Right lobe of liver (tissue), 6 donors: ENCODE measurements at regions of chr19 and their contacts with region 1.

Region 1: DNA sequence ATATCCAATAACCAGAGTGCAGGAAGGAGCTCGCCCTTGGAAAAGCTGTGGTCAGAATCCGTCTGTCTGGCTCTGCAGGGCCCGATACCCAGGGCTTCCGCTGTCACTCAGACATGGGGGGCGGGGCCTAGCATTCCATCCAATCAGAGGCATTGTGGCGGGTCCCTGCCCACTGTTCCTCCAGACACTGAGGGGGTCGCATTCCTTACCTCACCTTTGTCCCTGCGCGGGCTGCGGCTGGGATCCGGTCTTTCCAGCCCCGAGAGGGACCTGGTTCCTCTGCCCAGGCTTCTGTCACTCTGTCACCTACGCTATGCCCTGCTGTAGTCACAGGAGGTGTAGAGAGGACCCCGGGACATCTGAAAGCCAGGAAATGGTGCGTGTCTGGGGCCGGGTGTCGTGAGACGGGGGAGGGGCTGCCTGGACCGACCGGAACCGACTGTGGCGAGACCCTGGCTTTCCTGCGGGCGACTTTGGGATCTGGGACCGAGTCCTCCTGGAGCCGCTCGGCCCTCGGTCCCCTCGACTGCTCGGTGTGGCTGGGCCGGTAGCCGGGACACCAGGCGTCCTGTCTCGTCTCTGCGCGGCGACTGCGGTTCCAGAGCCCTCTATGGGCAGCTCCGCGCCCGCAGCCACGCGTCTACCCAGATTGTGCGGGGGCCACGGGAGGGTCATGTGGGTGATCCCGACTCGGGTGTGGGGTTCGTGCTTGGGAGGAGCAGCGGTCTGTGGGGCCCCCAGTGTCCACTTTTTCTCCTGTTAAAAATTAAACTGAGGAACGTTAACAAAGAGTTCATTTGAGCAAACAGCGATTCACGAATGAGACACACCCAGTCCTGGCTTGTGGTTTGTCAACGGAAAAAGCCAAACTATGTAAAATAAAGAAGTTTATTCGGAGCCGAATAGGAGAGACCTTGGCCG is at the start of gene ZNF69:
- DNase-seq: peak; percentile 92 to 95 (median 93)
- ATAC-seq: peak; percentile 98 to 99 (median 99)
- H3K4me3 ChIP-seq: peak within 1 kb of the TSS; percentile 61 to 82 (median 73)
- H3K27ac ChIP-seq: peak within 1 kb of the TSS; percentile 63 to 91 (median 87)
- H3K4me1 ChIP-seq: no peaks in the 10 kb centered on the region
- H3K27me3 ChIP-seq: no peaks in the 10 kb centered on the region
- CTCF ChIP-seq: peak in 2 of 4 donors; percentile 18 to 23
- POLR2A ChIP-seq: peak; percentile 66
- total RNA-seq, gene ZNF69: 6.1 to 10.0 (median 9.2) TPM

Region 2: GRCh38 chr19:11798391-11799330 is 89.2 kb before region 1 on chr19 and contains the start of gene ZNF491:
- intact Hi-C with region 1: no loop called
- DNase-seq: peak; percentile 95 to 96 (median 95)
- ATAC-seq: peak; percentile 98 to 99 (median 98)
- H3K4me3 ChIP-seq: peak within 1 kb of the TSS; percentile 61 to 81 (median 78)
- H3K27ac ChIP-seq: peak within 1 kb of the TSS; percentile 20 to 72 (median 47)
- H3K4me1 ChIP-seq: peaks cover 0 to 8% (median 4%) of the 10 kb centered on the region in 4 donors
- H3K27me3 ChIP-seq: no peaks in the 10 kb centered on the region
- CTCF ChIP-seq: peak in 3 of 4 donors; percentile 18 to 25 (median 24)
- POLR2A ChIP-seq: peak; percentile 84
- total RNA-seq, gene ZNF491: 0.37 to 1.3 (median 0.98) TPM

Region 3: DNA sequence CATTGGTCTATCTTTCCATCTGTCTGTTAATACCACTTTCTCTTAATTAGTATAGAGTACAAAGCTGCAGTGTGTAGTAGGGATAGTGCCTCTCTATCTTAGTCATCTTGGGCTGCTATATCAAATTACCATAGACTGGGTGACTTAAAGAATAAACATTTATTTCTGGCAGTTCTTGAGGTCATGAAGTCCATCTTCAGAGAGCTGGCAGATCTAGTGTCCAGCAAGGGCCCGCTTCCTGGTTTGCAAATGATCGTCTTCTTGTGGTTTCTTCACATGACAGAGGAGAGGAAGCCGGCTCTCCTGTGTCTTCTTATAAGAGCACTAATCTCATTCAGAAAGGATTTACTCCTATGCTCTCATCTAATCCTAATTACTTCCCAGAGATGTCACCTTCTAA is 43.2 kb after region 1 on chr19:
- intact Hi-C with region 1: no loop called
- DNase-seq: no peak
- ATAC-seq: no peak
- H3K4me3 ChIP-seq: no peak overlapping the region
- H3K27ac ChIP-seq: no peak overlapping the region
- H3K4me1 ChIP-seq: peaks cover 0 to 5% (median 2%) of the 10 kb centered on the region in 4 donors
- H3K27me3 ChIP-seq: no peaks in the 10 kb centered on the region
- CTCF ChIP-seq: no peak
- POLR2A ChIP-seq: no peak

Region 4: GRCh38 chr19:11942843-11943108 is 54.9 kb after region 1 on chr19:
- intact Hi-C with region 1: no loop called
- DNase-seq: no peak
- ATAC-seq: no peak
- H3K4me3 ChIP-seq: no peak overlapping the region
- H3K27ac ChIP-seq: no peak overlapping the region
- H3K4me1 ChIP-seq: no peaks in the 10 kb centered on the region
- H3K27me3 ChIP-seq: no peaks in the 10 kb centered on the region
- CTCF ChIP-seq: no peak
- POLR2A ChIP-seq: no peak

Region 5: DNA sequence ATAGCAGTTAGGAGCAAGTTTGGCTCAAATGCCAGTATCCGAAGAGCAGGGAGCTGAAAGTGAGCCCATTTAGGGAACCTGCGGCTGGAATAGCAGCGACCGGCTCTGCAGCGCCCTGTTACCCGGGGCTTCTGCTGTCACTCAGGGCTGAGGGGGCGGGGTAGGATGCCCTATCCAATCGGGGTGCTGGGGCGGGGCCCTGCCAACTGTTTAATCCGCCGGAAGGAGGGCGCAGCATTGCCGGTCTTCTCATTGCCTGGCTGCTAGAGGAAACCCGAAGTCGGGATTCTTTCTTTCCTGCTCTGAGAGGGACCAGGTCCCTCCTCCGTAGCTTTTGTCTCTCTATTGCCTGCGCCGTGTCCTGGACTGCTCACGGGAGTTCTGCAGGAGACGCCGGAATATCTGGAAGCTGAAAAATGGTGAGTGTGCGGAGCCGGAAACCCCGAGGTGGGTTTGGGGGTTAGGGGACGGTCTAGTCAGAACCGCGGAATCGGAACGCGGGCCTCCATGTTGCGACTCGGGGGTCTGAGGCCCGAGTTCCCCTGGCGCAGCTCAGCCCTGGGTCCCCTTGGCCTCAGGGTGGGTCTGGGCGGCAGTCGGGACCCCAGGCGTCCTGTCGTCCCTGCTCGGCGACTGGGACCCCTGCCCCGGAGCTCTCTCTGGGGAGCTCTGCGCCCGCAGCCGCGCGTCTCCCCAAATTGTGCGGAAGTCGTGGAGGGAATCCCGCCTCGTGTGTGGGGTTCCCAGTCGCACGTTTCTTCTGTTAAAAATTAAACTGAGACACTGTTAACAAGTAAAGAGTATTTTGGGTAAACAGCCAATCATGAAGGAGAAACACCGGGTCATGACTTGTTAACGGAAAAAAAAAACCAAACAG is 99.8 kb after region 1 on chr19:
- intact Hi-C with region 1: loop called in 1 of 2 experiments (anchors 10 kb)
- DNase-seq: peak; percentile 94 to 97 (median 97)
- ATAC-seq: peak; percentile 99
- H3K4me3 ChIP-seq: peak overlapping the region; percentile 74 to 91 (median 79)
- H3K27ac ChIP-seq: peak overlapping the region; percentile 77 to 81 (median 78)
- H3K4me1 ChIP-seq: no peaks in the 10 kb centered on the region
- H3K27me3 ChIP-seq: no peaks in the 10 kb centered on the region
- CTCF ChIP-seq: no peak
- POLR2A ChIP-seq: peak; percentile 72